CD4-positive, alpha-beta T cell (primary cell): ENCODE measurements at regions of chr5 and their contacts with region 1.

Region 1: GRCh38 chr5:103693517-103693916 is 130.9 kb upstream of the NUDT12 start:
- DNase-seq: no peak
- ATAC-seq: no peak
- H3K4me3 ChIP-seq: no peak overlapping the region
- H3K4me3 Mint-ChIP-seq: no peak overlapping the region
- H3K27ac ChIP-seq: no peak overlapping the region
- H3K27ac Mint-ChIP-seq: no peak overlapping the region
- H3K4me1 ChIP-seq: no peaks in the 10 kb centered on the region
- H3K4me1 Mint-ChIP-seq: no peaks in the 10 kb centered on the region
- H3K27me3 ChIP-seq: no peaks in the 10 kb centered on the region
- H3K27me3 Mint-ChIP-seq: no peaks in the 10 kb centered on the region
- CTCF ChIP-seq: no peak

Region 2: DNA sequence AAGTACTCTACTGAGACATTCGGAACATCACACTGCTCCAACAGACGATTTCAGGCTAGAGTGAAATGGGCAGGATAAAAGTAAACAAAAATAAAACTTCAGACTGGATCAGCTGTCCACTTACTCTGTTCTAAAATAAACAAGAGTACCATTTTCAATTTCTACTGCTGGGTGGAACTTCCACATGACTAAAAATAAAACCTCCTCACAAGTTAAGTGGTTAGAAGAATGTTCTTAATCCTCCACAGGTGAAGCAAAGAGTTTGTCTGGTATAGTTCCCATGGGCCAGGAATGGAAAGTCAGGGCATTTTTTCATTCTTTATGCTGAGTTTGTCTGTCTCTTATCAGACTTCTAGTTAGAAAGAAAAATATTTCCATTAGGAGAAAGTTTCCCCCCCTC is 146.7 kb before region 1 on chr5:
- CTCF ChIA-PET with region 1: no interaction called
- POLR2A ChIA-PET with region 1: no interaction called
- intact Hi-C with region 1: no loop called
- DNase-seq: no peak
- ATAC-seq: no peak
- H3K4me3 ChIP-seq: no peak overlapping the region
- H3K4me3 Mint-ChIP-seq: no peak overlapping the region
- H3K27ac ChIP-seq: no peak overlapping the region
- H3K27ac Mint-ChIP-seq: no peak overlapping the region
- H3K4me1 ChIP-seq: no peaks in the 10 kb centered on the region
- H3K4me1 Mint-ChIP-seq: no peaks in the 10 kb centered on the region
- H3K27me3 ChIP-seq: no peaks in the 10 kb centered on the region
- H3K27me3 Mint-ChIP-seq: no peaks in the 10 kb centered on the region
- CTCF ChIP-seq: no peak

Region 3: GRCh38 chr5:103703617-103704016 is 10.1 kb after region 1 on chr5:
- CTCF ChIA-PET with region 1: no interaction called
- POLR2A ChIA-PET with region 1: no interaction called
- intact Hi-C with region 1: loop called in 1 of 2 experiments (anchors 1 kb)
- DNase-seq: no peak
- ATAC-seq: no peak
- H3K4me3 ChIP-seq: no peak overlapping the region
- H3K4me3 Mint-ChIP-seq: no peak overlapping the region
- H3K27ac ChIP-seq: no peak overlapping the region
- H3K27ac Mint-ChIP-seq: no peak overlapping the region
- H3K4me1 ChIP-seq: no peaks in the 10 kb centered on the region
- H3K4me1 Mint-ChIP-seq: no peaks in the 10 kb centered on the region
- H3K27me3 ChIP-seq: no peaks in the 10 kb centered on the region
- H3K27me3 Mint-ChIP-seq: no peaks in the 10 kb centered on the region
- CTCF ChIP-seq: no peak